Dorsolateral prefrontal cortex (tissue), 120 donors: ENCODE measurements at regions of chr1 and their contacts with region 1.

Region 1: DNA sequence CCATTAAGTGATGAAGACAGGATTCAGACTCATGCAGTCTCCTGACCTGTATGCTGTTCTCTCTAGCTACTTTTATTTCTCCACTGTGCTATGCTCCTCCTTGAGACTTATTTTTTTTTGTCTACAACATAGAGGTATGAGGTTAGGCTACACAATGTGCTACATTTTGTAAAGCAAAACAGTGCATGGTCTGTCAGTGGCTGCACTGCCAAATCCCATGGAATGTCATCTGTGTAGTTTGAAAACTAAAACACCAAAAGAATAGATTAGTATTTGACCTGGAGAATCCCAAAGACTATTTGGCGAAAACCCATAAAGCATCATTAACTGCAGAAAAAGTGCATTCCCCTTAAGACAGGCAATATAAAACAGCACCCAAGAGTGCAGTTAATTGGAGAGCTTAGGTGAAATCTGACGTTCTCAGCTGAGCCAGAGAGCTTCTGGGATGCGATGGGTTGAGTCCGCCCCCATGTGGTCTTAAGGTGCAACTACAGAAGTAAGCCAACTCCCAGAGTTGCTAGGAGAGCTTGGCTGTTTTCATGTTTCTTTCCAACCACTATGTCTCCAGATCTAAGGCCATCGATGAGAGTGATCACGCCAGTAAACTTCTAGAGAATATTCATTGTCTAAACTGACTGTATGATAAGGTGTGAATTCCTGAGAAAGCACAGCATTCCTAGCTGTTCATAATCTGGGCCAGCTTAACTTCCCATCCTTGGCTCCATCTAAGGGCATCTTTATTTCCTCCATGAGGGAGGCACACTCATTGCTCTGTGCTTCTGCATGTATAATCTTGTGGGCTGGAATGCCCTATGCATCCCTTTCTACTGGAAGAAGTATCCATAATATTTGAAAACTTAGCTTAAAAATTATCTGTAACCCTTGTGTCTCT is 20.7 kb upstream of the CYP2J2 start:
- DNase-seq: peak; percentile 41 to 75 (median 63)
- H3K4me3 ChIP-seq: peak overlapping the region in 9 of 59 donors; percentile 8 to 44 (median 16)
- H3K27ac ChIP-seq: peak overlapping the region in 2 of 59 donors; percentile 10 to 61
- H3K27me3 ChIP-seq: no peaks in the 10 kb centered on the region
- CTCF ChIP-seq: peak; percentile 65 to 98 (median 95)

Region 2: DNA sequence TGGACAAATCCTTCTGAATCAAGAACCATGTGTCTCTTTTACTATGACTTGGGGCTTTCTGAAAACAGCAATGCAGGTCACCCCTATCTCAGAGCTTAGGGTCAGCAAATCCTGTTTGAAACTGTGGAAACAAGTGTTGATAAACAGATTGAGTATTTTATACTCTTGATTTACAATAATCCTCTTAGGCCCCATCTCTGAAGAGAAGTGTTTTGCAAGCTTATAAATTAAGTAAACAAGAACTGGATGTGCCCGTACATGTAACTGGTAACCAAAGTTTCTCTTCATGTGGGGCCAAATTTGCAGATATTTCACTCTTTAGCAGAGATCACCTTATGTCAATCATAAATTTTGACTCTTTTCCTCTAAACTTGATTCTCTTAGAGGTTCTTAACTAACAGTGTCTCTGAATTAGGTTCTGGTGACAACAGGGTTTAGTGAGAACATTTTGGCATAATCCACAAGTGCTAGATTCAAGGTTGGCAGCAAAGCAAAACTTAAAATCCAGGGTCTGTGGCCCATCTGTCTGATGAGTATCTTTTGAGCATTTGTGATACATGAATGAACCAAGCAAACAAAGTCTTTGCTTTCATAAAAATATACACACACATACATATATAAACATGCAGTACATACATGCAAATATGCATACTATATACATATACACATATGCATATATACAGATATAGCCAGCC is 315.6 kb before region 1 on chr1:
- intact Hi-C with region 1: no loop called
- DNase-seq: no peak
- H3K4me3 ChIP-seq: no peak overlapping the region
- H3K27ac ChIP-seq: no peak overlapping the region
- H3K27me3 ChIP-seq: no peaks in the 10 kb centered on the region
- CTCF ChIP-seq: no peak

Region 3: DNA sequence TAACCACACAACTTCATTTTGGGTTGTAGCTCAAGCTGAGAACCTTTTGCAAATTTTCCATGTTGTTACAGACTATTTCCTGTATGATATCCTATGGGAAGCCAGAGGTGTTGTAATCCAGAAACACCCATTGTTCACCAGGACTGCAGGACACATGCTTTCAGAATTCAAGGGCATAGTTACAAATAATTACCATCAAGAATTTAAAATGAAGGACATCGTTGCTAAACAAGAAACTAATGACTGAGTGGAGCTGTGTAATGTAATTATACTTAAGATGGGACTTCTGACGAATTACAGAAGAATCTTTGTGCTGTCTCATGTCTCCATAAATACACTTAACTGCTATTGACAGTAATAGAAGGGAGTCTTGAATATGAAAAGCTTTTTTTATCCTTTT is 180.2 kb before region 1 on chr1:
- intact Hi-C with region 1: loop called in 1 of 2 experiments (anchors 10 kb)
- DNase-seq: no peak
- H3K4me3 ChIP-seq: no peak overlapping the region
- H3K27ac ChIP-seq: no peak overlapping the region
- H3K27me3 ChIP-seq: no peaks in the 10 kb centered on the region
- CTCF ChIP-seq: no peak

Region 4: DNA sequence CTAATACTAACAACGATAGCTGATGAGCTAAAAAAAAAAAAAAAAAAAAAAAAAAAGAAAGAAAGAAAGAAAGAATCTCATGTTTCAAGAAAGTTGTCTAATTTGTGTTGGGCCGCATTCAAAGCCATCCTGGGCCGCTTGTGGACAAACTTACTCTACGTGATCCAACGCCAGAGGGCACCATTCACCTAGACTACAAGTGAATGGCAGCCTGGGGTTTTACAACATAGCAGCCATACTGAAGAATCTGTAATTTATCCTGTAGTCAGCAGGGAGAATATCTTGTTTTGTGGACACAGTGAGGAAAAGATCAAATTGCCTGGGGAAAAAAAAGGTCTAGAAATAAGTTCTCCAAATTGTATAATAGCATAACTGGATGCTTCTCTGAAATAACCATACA is 67.7 kb before region 1 on chr1:
- intact Hi-C with region 1: loop called (anchors 2 to 5 kb)
- DNase-seq: peak; percentile 11 to 81 (median 57)
- H3K4me3 ChIP-seq: no peak overlapping the region
- H3K27ac ChIP-seq: no peak overlapping the region
- H3K27me3 ChIP-seq: no peaks in the 10 kb centered on the region
- CTCF ChIP-seq: peak; percentile 34 to 78 (median 56)

Region 5: GRCh38 chr1:59903141-59903754 is 44.0 kb before region 1 on chr1:
- intact Hi-C with region 1: loop called (anchors 1 to 5 kb)
- DNase-seq: peak in 3 of 10 donors; percentile 35 to 52 (median 50)
- H3K4me3 ChIP-seq: peak overlapping the region in 28 of 59 donors; percentile 2 to 51 (median 30)
- H3K27ac ChIP-seq: peak overlapping the region in 43 of 59 donors; percentile 3 to 85 (median 61)
- H3K27me3 ChIP-seq: peaks cover 0 to 3% (median 0%) of the 10 kb centered on the region in 45 donors
- CTCF ChIP-seq: peak in 55 of 56 donors; percentile 14 to 90 (median 69)